Posterior vena cava (tissue), 2 donors: ENCODE measurements at regions of chr22 and their contacts with region 1.

Region 1: DNA sequence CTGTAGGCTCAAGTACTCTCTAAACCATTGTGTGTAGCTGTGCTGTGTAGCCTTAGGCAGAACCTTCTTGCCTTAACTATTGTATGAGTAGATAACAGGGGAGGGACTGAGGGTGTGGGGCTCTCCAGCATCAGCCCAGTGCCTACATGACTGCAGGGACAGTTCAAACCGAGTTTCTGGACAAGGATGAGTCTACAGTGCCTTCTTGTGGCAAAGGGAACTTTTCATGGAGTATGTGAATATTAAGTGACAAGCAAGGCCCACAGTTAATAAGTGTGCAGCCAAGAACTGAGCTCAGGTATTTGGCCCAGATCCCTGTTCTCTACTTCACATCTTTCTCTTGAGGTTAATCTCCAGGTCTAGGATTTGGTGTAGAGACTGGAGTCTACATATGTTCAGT is 424.4 kb upstream of the LARGE1 start:
- DNase-seq: no peak

Region 2: GRCh38 chr22:34380532-34380931 is 35.8 kb after region 1 on chr22:
- intact Hi-C with region 1: no loop called
- DNase-seq: no peak

Region 3: DNA sequence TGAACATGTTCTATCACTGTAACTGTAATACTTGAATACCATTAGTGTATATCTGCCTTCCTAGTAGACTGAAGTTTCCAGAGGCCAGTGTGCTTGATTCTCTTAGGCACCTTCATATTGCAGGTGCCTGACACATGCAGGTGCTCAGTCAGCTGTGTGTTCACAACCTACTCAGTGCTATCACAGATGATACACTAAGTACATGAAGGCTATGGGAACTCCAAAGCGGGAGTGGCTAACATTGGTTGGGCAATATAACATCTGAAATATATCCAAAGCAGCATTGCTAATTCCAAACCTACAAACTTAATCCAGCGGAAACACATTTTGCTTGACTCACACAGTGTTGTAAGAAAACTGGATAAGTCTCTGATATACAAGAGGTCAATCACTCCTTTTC is 182.0 kb after region 1 on chr22:
- intact Hi-C with region 1: no loop called
- DNase-seq: no peak

Region 4: GRCh38 chr22:35102663-35103062 is 758.0 kb after region 1 on chr22:
- intact Hi-C with region 1: loop called in 1 of 2 experiments (anchors 5 kb)
- DNase-seq: no peak